Activated CD8-positive, alpha-beta T cell treated with anti-CD3 and anti-CD28 coated beads for 36 hours (primary cell): ENCODE measurements at regions of chr19 and their contacts with region 1.

Region 1: DNA sequence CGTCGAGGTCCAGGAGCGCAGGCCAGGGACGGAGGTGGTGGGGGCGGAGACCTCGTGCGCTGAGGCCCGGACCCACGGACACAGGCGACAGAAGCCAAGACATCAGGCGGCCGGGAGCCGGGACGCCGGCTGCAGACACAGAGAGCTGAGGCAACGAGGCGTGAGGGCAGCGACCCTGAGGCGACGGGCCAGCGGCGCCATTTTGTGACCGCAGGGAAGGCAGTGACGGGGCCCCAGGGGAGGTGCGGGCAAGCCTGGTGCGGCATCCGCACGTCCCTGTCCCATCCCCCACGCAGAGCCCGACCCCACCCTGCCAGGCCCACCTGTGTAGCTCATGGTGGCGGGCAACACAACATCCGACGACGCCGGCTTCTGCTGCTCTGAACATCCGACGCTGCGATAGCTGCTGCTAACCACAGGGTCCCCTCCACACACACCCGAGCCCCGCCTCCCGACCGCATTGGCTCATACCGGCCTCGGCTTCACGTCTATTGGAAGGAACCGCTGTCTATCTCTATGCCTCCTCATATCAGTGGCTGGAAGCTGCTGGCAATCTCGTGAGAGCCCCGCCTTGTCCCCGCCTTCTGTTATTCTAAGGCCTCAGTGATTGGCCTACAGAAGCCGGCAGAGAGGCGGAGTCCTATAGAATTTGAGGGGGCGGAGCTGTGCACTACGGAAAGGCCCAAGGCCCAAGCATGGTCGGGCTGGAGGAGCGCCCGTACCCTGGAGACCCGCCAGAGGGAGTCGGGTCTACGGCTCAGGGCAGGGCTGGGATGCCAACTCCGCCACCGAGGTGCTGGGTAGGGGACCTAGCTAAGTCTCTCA is at the start of gene AKAP8L:
- DNase-seq: peak; percentile 100
- ATAC-seq: peak; percentile 97
- H3K4me3 Mint-ChIP-seq: peak within 1 kb of the TSS; percentile 98
- H3K27ac Mint-ChIP-seq: peak within 1 kb of the TSS; percentile 99
- H3K4me1 Mint-ChIP-seq: peaks cover 36% of the 10 kb centered on the region
- H3K27me3 Mint-ChIP-seq: no peaks in the 10 kb centered on the region
- CTCF ChIP-seq: peak; percentile 87
- total RNA-seq, gene AKAP8L: 83.1 to 88.8 TPM

Region 2: GRCh38 chr19:15177269-15178116 is 241.3 kb before region 1 on chr19:
- CTCF ChIA-PET with region 1: interaction called, 11 read pairs
- POLR2A ChIA-PET with region 1: no interaction called
- intact Hi-C with region 1: no loop called
- DNase-seq: peak; percentile 90
- ATAC-seq: peak; percentile 98
- H3K4me3 Mint-ChIP-seq: peak overlapping the region; percentile 42
- H3K27ac Mint-ChIP-seq: no peak overlapping the region
- H3K4me1 Mint-ChIP-seq: peaks cover 4% of the 10 kb centered on the region
- H3K27me3 Mint-ChIP-seq: peaks cover 15% of the 10 kb centered on the region
- CTCF ChIP-seq: peak; percentile 95

Region 3: DNA sequence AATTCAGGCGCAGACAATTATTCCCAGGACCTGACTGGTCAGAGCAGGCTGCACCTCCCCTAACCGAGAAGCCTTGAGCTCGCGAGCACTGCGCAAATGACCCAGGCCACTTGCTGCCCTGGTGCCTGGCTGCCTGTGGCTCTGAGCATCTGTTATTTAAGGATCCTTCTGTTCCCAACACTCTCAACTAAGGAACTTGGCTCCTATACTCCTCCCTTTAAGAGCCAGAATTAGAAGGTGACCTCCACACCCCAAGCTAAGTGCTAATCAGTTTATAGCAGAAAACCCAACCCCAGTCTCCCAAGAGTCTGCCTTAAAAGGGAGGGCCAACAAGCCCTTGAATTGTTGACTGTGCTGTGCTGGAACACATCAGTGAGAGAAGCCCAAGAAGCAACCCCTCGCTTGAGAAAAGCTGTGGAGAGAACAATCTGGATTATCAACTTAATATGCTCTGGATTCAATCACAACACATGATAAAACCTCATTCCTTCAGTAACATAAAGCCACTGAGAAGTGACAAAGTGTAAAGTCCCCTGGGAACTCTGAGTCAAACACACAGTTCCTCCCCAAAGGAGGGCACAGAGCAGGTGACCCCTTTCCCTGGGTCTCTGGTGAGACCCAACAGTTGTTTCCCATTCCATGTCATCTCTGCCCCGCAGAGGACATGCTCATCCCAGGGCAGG is 14.6 kb before region 1 on chr19:
- CTCF ChIA-PET with region 1: interaction called, 11 read pairs
- POLR2A ChIA-PET with region 1: interaction called, 17 read pairs
- intact Hi-C with region 1: no loop called
- DNase-seq: no peak
- ATAC-seq: no peak
- H3K4me3 Mint-ChIP-seq: no peak overlapping the region
- H3K27ac Mint-ChIP-seq: peak overlapping the region; percentile 17
- H3K4me1 Mint-ChIP-seq: peaks cover 25% of the 10 kb centered on the region
- H3K27me3 Mint-ChIP-seq: no peaks in the 10 kb centered on the region
- CTCF ChIP-seq: no peak

Region 4: GRCh38 chr19:15449620-15450527 is 31.1 kb after region 1 on chr19 and contains the start of gene WIZ:
- CTCF ChIA-PET with region 1: interaction called, 7 read pairs
- POLR2A ChIA-PET with region 1: interaction called, 19 read pairs
- intact Hi-C with region 1: no loop called
- DNase-seq: peak; percentile 86
- ATAC-seq: peak; percentile 74
- H3K4me3 Mint-ChIP-seq: peak within 1 kb of the TSS; percentile 61
- H3K27ac Mint-ChIP-seq: peak within 1 kb of the TSS; percentile 87
- H3K4me1 Mint-ChIP-seq: peaks cover 14% of the 10 kb centered on the region
- H3K27me3 Mint-ChIP-seq: no peaks in the 10 kb centered on the region
- CTCF ChIP-seq: no peak
- total RNA-seq, gene WIZ: 19.3 to 21.0 TPM

Region 5: GRCh38 chr19:15466851-15467733 is 48.3 kb after region 1 on chr19:
- CTCF ChIA-PET with region 1: interaction called, 14 read pairs
- POLR2A ChIA-PET with region 1: interaction called, 20 read pairs
- intact Hi-C with region 1: loop called (anchors 5 kb)
- DNase-seq: peak; percentile 83
- ATAC-seq: peak; percentile 43
- H3K4me3 Mint-ChIP-seq: peak overlapping the region; percentile 45
- H3K27ac Mint-ChIP-seq: peak overlapping the region; percentile 96
- H3K4me1 Mint-ChIP-seq: peaks cover 52% of the 10 kb centered on the region
- H3K27me3 Mint-ChIP-seq: no peaks in the 10 kb centered on the region
- CTCF ChIP-seq: no peak

Region 6: GRCh38 chr19:15498911-15499317 is 80.1 kb after region 1 on chr19:
- CTCF ChIA-PET with region 1: no interaction called
- POLR2A ChIA-PET with region 1: no interaction called
- intact Hi-C with region 1: no loop called
- DNase-seq: no peak
- ATAC-seq: peak; percentile 42
- H3K4me3 Mint-ChIP-seq: no peak overlapping the region
- H3K27ac Mint-ChIP-seq: no peak overlapping the region
- H3K4me1 Mint-ChIP-seq: peaks cover 8% of the 10 kb centered on the region
- H3K27me3 Mint-ChIP-seq: no peaks in the 10 kb centered on the region
- CTCF ChIP-seq: no peak

Region 7: GRCh38 chr19:15562145-15562544 is 143.3 kb after region 1 on chr19:
- CTCF ChIA-PET with region 1: interaction called, 138 read pairs
- POLR2A ChIA-PET with region 1: interaction called, 35 read pairs
- intact Hi-C with region 1: loop called (anchors 2 kb)
- DNase-seq: no peak
- ATAC-seq: no peak
- H3K4me3 Mint-ChIP-seq: no peak overlapping the region
- H3K27ac Mint-ChIP-seq: no peak overlapping the region
- H3K4me1 Mint-ChIP-seq: no peaks in the 10 kb centered on the region
- H3K27me3 Mint-ChIP-seq: peaks cover 13% of the 10 kb centered on the region
- CTCF ChIP-seq: no peak